ENCODE measurements at regions of chr9 and their contacts with region 1.

Region 1: DNA sequence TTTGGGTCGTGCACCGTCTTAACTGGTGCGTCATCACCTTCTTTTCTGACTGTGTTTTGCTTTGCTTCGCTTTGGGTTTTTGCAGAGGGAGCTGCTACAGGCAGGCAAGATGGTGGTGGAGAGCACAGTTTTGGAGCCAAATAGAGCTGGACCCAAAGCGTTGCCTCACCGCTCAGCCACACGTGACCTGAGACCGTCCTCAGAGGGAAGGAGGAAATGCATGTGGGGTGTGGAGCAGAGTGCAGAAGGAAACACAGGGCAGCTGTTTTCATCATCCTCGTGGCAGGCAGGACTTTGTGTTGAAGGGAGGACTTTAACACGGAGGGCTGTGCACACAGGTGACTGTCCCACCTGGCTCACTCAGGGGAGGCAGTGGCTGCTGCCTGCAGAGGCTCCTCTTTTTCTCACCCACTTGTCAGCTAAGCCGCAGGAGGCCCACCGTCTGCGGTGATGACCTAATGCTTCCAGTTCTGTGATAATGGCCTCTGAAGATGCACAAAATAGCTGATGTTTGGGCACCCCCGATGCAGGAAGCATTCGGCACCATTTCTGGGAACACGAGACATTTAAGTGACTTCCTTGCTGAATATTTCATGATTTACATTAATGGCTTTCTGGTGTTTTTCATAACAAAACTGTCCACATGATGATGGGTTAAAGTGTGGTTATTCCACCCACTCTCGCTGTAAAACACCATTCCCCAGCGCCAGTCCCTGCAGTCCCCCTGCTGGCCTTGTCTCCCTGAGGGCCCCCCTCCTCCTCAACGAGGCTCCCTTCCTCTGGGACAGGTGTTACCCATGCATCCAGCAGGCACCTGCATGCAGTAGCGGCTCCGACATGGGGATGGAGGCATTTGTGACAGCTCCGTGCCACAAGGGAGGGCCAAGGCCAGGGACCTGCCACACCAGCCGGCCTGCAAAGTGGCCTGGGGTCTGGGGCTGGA is 12.4 kb upstream of the UBAC1 start:
- DNase-seq: no peak
- ATAC-seq: no peak
- H3K4me3 Mint-ChIP-seq: no peak overlapping the region
- H3K27ac Mint-ChIP-seq: no peak overlapping the region
- H3K4me1 Mint-ChIP-seq: peaks cover 10% of the 10 kb centered on the region; the same call in 1 of the 2 replicates
- H3K27me3 Mint-ChIP-seq: no peaks in the 10 kb centered on the region
- CTCF ChIP-seq: no peak

Region 2: DNA sequence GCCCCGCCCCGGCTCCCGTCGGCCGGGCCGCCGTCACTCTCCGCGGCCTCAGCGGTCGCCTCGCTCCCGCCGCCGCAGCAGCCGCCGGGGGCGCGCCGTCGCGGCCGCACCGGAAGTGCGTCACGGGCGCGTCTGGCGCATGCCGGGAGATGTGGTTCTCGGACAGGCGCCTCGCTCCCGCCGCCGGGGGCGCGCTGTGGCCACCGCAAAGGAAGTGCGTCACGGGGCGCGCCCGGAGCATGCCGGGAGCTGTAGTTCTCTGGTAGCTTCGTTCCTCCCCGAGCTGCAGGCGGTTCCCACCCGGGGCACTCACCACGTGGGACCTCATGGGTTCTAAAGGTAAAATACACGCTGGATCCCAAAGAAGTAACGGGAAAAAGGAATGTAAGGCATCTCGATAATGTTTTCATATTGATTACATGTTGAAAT is 12.3 kb before region 1 on chr9 and contains the start of gene UBAC1:
- CTCF ChIA-PET with region 1: interaction called, 10 read pairs
- POLR2A ChIA-PET with region 1: no interaction called
- DNase-seq: peak; percentile 94
- ATAC-seq: peak; percentile 85
- H3K4me3 Mint-ChIP-seq: peak within 1 kb of the TSS; percentile 85
- H3K27ac Mint-ChIP-seq: no peak within 1 kb of the TSS
- H3K4me1 Mint-ChIP-seq: peaks cover 21% of the 10 kb centered on the region
- H3K27me3 Mint-ChIP-seq: no peaks in the 10 kb centered on the region
- CTCF ChIP-seq: no peak
- total RNA-seq, gene UBAC1: 46.4 to 55.6 TPM (median 53.3 TPM) in 3 replicates

Region 3: DNA sequence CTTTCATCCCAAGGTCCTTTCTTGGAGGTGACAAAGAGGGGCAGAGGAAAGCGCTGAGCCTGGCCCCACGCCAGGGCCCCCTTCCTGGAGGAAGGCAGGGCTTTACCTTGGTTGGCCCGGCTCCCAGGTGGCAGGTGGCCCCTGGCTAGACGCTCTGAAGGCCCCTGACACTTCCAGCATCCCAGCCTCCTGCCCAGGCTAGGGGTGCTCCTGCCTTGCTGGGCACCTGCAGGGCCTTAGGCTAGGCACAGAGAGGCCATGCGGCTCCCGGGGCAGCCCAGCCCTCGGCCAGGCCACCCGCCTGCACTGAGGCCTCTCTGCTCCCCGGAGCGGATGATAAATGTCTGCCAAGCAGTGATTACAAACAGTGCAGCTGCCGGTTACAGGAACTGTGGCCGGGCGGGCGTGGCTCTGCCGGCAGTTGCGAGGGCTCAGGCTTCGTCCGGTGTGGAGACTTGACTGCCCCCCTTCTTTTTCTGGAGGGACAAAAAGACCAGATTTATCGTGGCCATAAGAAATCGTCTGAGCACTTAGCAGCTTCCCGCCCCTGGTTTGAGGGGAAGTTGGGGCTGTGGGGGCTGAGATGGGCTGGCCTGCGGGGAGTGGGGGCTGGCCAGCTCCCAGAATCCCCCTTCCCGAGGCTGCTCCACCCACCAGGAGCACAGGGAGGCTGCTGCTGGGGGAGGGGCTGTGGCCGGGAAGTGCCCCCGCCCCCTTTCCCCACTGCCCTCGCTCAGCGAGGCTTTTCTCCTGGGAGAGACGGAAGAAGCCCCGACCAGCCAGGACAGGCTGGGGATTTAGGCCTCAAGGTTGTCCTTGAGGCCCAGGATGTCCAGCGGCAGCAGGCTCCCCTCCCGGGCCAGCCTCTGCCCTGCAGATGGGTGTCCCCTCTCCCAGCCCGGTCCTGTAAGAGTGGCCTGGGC is 19.2 kb after region 1 on chr9:
- CTCF ChIA-PET with region 1: interaction called, 13 read pairs
- POLR2A ChIA-PET with region 1: no interaction called
- DNase-seq: peak; percentile 71
- ATAC-seq: peak; percentile 74
- H3K4me3 Mint-ChIP-seq: peak overlapping the region; percentile 53
- H3K27ac Mint-ChIP-seq: 0 out of 2 replicates have a peak overlapping the region, but pooled peaks have one; percentile 41
- H3K4me1 Mint-ChIP-seq: peaks cover 23% of the 10 kb centered on the region
- H3K27me3 Mint-ChIP-seq: no peaks in the 10 kb centered on the region
- CTCF ChIP-seq: no peak

Region 4: GRCh38 chr9:136031741-136032730 is 58.5 kb after region 1 on chr9:
- CTCF ChIA-PET with region 1: no interaction called
- POLR2A ChIA-PET with region 1: no interaction called
- DNase-seq: no peak
- ATAC-seq: no peak
- H3K4me3 Mint-ChIP-seq: no peak overlapping the region
- H3K27ac Mint-ChIP-seq: no peak overlapping the region
- H3K4me1 Mint-ChIP-seq: peaks cover 2% of the 10 kb centered on the region; the same call in 1 of the 2 replicates
- H3K27me3 Mint-ChIP-seq: no peaks in the 10 kb centered on the region
- CTCF ChIP-seq: no peak

Region 5: DNA sequence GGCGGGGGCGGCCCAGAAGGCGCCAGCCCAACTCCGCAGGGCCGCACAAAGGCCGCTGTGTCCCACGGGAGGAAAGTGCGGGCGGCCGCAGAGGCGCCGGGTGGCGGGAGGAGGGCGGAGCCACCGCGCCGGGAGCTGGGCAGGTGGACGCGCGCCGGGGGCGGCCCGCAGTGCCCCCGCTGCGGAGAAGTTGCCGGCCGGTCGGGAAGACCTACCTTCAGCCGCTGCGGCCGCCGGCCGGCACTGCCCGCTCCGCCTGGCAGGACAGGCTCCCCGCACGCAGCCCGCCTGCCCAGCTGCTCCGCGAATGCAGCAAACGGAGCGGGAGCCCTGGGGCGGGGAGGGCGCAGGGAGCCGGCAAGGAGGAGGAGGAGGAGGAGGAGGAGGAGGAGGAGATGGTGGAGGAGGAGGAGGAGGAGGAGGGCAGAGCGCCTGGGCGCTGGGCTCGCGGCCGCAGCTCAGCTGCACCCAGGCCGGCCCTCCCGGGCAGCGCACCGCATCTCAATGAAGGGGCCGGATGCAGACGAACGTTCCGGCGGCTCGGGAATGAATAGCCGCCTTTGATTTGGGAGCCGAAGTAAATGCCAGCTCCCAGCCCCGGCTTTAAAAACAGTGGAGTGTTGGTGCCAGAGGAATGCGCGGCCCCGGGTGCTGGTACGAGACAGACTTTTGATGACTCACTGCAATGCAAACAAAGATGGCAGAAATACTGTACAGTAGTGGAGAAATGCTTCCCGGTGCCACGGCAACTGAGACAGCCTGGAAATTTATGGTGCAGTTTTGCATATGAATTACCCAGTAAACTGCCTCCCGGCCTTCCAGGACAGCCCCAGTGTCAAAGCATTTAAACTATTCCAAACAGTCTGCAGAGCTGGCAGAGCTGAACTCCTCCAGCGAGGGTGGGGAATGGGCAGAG is 78.2 kb after region 1 on chr9:
- CTCF ChIA-PET with region 1: interaction called, 13 read pairs
- POLR2A ChIA-PET with region 1: no interaction called
- DNase-seq: peak; percentile 59
- ATAC-seq: peak; percentile 63
- H3K4me3 Mint-ChIP-seq: peak overlapping the region; percentile 68
- H3K27ac Mint-ChIP-seq: peak overlapping the region; percentile 73
- H3K4me1 Mint-ChIP-seq: peaks cover 29% of the 10 kb centered on the region
- H3K27me3 Mint-ChIP-seq: no peaks in the 10 kb centered on the region
- CTCF ChIP-seq: no peak

Region 6: GRCh38 chr9:136093995-136094881 is 120.7 kb after region 1 on chr9:
- CTCF ChIA-PET with region 1: interaction called, 22 read pairs
- POLR2A ChIA-PET with region 1: no interaction called
- DNase-seq: no peak
- ATAC-seq: peak; percentile 2; the same call in 1 of the 2 replicates
- H3K4me3 Mint-ChIP-seq: peak overlapping the region; percentile 63
- H3K27ac Mint-ChIP-seq: no peak overlapping the region
- H3K4me1 Mint-ChIP-seq: peaks cover 27% of the 10 kb centered on the region
- H3K27me3 Mint-ChIP-seq: peaks cover 43% of the 10 kb centered on the region
- CTCF ChIP-seq: no peak

Measured in WTC11 (cell line).